ENCODE measurements at regions of chr2 and their contacts with region 1.

Region 1: DNA sequence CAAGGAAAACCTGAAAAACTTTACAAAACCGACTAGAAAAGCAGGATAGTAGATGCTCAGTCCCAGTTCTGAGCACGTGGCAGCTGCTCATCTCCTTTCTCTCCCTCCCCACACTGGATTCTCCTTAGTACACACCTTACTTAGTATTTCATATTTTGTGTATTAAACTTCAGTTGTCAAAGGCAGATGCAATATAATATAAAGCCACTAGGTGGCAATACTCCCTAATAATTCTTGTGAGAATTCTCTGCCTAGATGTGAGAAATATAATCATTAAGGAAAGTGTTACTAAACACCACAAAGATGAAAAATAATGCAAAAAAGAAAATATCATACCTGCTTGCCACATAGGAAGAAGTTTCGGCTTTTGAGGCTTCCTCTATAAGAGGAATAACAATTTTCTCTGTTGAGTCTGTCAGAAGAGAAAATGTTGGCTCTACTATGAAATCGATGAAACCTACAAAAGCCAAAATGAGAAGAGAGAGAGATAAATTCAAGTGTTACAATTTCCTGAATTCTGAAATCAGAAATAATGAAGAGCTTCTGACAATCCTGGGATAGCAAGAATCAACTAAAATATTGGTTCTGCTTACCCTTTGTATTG is 200.6 kb downstream of the PPP1R1C start:
- ATAC-seq: peak in 3 of 8 experiments; percentile 30 to 47 (median 31)
- H3K4me3 ChIP-seq: no peak overlapping the region
- H3K27ac ChIP-seq: no peak overlapping the region
- H3K4me1 ChIP-seq: peaks cover 0 to 5% of the 10 kb centered on the region in 2 donors

Region 2: GRCh38 chr2:182642328-182642727 is 456.1 kb after region 1 on chr2:
- in situ Hi-C with region 1: loop called in 4 of 9 experiments (anchors 10 to 25 kb)
- ATAC-seq: peak in 4 of 8 experiments; percentile 47 to 100 (median 93)
- H3K4me3 ChIP-seq: no peak overlapping the region
- H3K27ac ChIP-seq: no peak overlapping the region
- H3K4me1 ChIP-seq: no peaks in the 10 kb centered on the region

Region 3: DNA sequence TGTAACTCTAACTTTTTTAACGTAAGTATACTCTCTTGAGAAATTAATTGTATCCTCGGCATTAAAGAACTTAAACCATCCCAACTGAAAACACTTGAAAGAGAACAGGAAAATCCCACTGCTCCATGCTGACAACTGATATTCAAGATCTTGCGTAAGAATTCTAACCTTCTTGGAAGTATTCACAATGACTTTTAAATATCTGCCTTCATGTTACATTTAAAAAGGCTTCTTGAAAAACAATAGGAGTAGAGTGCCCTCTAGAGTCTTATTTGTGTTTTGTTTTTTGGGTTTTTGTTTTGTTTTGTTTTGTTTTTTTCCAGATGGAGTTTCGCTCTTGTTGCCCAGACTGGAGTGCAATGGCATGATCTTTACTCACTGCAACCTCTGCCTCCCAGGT is 464.5 kb after region 1 on chr2:
- in situ Hi-C with region 1: loop called (anchors 5 to 25 kb)
- ATAC-seq: peak in 3 of 8 experiments; percentile 62 to 69 (median 64)
- H3K4me3 ChIP-seq: no peak overlapping the region
- H3K27ac ChIP-seq: no peak overlapping the region
- H3K4me1 ChIP-seq: no peaks in the 10 kb centered on the region

Region 4: DNA sequence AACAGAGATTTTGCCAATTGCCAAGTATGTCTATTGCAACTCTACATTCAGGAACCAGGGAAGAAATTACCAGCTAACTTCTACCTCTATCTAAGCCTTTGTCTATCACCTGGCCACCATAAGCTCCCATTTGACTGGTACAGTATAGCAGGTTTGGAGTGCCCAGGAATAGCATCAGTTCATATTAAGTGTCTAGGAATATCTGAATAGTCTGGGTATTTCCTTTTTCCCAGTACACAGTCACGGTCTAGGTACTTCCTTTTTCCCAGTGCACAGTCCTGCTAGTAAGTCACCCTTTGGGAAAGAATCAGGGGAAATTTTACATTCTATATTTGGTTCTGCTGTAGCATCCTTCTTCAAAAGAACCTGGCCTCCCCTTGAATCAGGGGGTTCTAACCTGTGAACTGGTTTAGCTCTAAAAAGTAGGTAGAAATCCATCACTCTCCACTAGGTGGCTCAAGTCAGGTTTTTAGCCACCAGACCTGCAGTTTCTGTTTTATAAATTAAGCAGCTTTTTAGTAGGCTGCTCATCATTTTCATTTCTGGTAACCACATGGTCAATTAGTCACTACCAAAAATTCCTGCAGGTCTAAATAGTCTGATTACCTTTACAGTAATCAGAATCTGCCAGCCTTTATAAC is 480.6 kb after region 1 on chr2:
- in situ Hi-C with region 1: loop called in 2 of 9 experiments (anchors 25 kb)
- ATAC-seq: peak in 3 of 8 experiments; percentile 50 to 61 (median 57)
- H3K4me3 ChIP-seq: no peak overlapping the region
- H3K27ac ChIP-seq: no peak overlapping the region
- H3K4me1 ChIP-seq: no peaks in the 10 kb centered on the region

Measured in motor neuron (in vitro differentiated cells).